Prostate gland (tissue), 2 donors: ENCODE measurements at regions of chr13 and their contacts with region 1.

Region 1: DNA sequence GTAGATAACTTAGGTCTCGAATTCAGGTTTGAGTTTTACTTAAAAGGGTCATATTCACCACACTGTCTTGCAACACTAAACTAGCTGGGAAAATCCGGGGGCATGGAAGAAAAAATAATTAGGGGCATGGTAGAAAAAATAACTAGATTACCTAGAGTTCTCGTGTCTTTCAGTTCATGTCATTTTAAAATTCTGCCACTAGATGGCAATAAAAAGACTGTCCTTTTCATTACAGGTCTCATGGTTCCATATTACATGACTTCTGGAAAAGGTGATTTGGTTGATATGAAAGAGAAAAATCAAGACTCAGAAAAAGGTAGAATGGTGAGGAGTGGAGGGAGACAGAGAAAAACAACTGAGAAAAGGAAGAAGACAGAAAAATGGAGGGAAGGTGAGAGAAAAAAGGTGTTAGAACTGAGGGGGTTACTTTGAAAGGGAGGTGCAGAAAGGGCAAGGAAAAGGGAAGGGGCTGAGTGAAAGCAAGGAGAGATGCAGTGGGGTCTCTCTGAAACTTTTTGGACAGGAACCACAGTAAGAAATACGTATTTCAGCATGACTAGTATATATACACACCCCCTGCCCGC is 299.0 kb downstream of the KLF12 start:
- DNase-seq: no peak
- H3K4me3 ChIP-seq: no peak overlapping the region
- H3K27ac ChIP-seq: no peak overlapping the region
- H3K4me1 ChIP-seq: no peaks in the 10 kb centered on the region
- H3K27me3 ChIP-seq: no peaks in the 10 kb centered on the region
- CTCF ChIP-seq: peak; percentile 26 to 73 (median 69)
- POLR2A ChIP-seq: no peak

Region 2: GRCh38 chr13:73754727-73755292 is 80.4 kb before region 1 on chr13:
- intact Hi-C with region 1: loop called (anchors 5 kb)
- DNase-seq: peak; percentile 35
- H3K4me3 ChIP-seq: no peak overlapping the region
- H3K27ac ChIP-seq: no peak overlapping the region
- H3K4me1 ChIP-seq: no peaks in the 10 kb centered on the region
- H3K27me3 ChIP-seq: no peaks in the 10 kb centered on the region
- CTCF ChIP-seq: peak; percentile 19 to 77 (median 66)
- POLR2A ChIP-seq: no peak

Region 3: DNA sequence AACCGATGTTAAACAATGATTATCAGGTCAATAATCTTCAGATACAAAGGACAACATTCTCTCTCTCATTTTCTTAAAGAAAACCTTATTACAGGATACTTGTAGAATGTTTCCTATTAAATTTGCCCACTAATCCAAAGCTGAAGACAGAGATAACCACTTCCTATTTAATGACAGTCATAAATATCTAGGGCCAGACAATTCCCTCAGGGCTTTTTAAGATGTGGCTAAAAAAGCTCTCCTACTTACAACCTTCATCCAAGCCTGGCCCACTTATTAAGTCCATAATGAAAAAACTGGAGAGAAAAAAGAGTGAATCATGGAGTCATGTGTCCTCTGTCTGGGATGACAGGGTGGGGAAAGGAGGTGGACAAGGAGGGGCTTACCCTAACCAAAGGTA is 63.0 kb after region 1 on chr13:
- intact Hi-C with region 1: no loop called
- DNase-seq: no peak
- H3K4me3 ChIP-seq: no peak overlapping the region
- H3K27ac ChIP-seq: no peak overlapping the region
- H3K4me1 ChIP-seq: no peaks in the 10 kb centered on the region
- H3K27me3 ChIP-seq: no peaks in the 10 kb centered on the region
- CTCF ChIP-seq: no peak
- POLR2A ChIP-seq: no peak

Region 4: GRCh38 chr13:74287724-74288169 is 452.5 kb after region 1 on chr13:
- intact Hi-C with region 1: loop called (anchors 5 kb)
- DNase-seq: peak; percentile 25
- H3K4me3 ChIP-seq: no peak overlapping the region
- H3K27ac ChIP-seq: no peak overlapping the region
- H3K4me1 ChIP-seq: peaks cover 7% of the 10 kb centered on the region
- H3K27me3 ChIP-seq: no peaks in the 10 kb centered on the region
- CTCF ChIP-seq: no peak
- POLR2A ChIP-seq: no peak

Region 5: GRCh38 chr13:75219479-75220237 is 1384.4 kb after region 1 on chr13:
- intact Hi-C with region 1: loop called (anchors 10 kb)
- DNase-seq: peak; percentile 67
- H3K4me3 ChIP-seq: peak overlapping the region in 1 of 2 donors; percentile 19
- H3K27ac ChIP-seq: no peak overlapping the region
- H3K4me1 ChIP-seq: no peaks in the 10 kb centered on the region
- H3K27me3 ChIP-seq: no peaks in the 10 kb centered on the region
- CTCF ChIP-seq: peak; percentile 86 to 93 (median 90)
- POLR2A ChIP-seq: no peak